ENCODE measurements at regions of chr1 and their contacts with region 1.

Region 1: DNA sequence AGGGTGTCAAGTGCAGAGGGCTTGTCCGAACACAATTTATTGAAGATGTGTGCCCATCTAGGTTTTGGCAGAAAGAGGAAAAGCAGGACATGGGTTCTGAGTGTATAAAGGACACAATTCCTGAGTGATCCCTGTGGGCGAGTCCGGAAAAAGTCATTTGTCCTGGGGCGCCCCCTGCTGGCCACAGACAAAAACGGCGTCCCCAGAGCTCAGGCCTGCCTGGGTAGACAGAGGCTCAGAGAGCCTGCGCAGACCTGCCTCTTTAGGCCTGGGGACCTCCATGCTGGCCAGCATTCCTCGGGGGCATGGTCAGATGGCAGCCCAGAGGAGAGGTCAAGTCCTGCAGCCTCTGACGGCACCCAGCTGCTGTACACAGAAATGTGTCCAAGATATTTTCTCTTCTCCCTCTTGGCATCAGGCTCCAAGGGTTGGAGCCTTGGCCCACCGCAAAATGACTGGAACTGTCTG is 65.5 kb upstream of the LRP8 start:
- DNase-seq: peak; percentile 75
- H3K4me3 Mint-ChIP-seq: no peak overlapping the region
- H3K27ac Mint-ChIP-seq: no peak overlapping the region
- H3K4me1 Mint-ChIP-seq: no peaks in the 10 kb centered on the region
- H3K27me3 Mint-ChIP-seq: peaks cover 53% of the 10 kb centered on the region

Region 2: DNA sequence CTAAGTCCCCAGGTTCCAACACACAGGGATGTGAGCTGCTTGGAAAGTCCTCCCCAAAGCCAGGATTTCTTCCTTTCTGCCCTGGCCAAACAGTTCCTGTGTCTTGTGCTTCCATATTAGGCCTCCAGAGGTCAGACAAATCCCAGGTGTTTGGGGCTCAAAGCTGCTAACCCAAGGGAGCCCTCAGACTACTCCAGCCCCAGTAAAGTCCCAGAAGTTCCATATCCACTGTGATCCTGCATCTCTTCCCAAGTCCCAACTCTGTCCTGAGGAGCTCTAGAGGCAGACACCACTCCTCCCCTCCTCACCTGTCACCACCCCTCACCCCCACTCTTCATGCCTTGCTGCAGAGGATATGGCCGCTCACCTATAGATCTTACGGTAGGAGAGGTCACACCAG is 127.3 kb before region 1 on chr1:
- CTCF ChIA-PET with region 1: interaction called, 16 read pairs
- DNase-seq: no peak
- H3K4me3 Mint-ChIP-seq: no peak overlapping the region
- H3K27ac Mint-ChIP-seq: no peak overlapping the region
- H3K4me1 Mint-ChIP-seq: no peaks in the 10 kb centered on the region
- H3K27me3 Mint-ChIP-seq: no peaks in the 10 kb centered on the region

Region 3: DNA sequence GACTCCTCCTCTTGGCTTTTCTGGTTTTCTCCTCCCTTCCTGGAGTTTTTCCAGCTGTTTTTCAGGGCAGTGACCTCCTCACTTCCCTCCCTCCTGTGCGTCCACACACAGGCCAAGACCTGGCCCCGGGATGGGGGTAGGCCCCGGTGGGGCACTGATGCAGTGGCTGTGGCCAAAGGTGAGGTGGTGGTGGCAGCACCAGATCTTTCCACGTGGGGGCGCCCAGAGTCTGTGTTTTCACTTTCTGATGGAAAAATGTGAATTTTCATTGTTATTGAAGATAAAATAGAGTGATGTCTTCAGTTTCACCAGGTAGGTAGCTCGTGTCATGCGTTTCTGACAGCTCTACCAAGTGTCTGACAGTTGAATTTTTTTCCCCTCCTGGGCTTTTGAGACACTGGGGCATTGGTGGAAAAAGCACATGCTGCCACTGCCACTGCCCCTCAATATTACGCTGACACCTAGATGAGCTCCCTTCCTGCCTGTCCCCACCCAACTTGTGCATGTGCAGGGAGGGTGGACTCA is 115.1 kb before region 1 on chr1:
- CTCF ChIA-PET with region 1: interaction called, 141 read pairs
- DNase-seq: peak; percentile 81
- H3K4me3 Mint-ChIP-seq: no peak overlapping the region
- H3K27ac Mint-ChIP-seq: peak overlapping the region; percentile 42
- H3K4me1 Mint-ChIP-seq: no peaks in the 10 kb centered on the region
- H3K27me3 Mint-ChIP-seq: no peaks in the 10 kb centered on the region

Region 4: GRCh38 chr1:53413175-53414001 is 20.0 kb after region 1 on chr1:
- CTCF ChIA-PET with region 1: interaction called, 23 read pairs
- DNase-seq: peak; percentile 75
- H3K4me3 Mint-ChIP-seq: peak overlapping the region; percentile 46
- H3K27ac Mint-ChIP-seq: peak overlapping the region; percentile 99
- H3K4me1 Mint-ChIP-seq: peaks cover 49% of the 10 kb centered on the region
- H3K27me3 Mint-ChIP-seq: peaks cover 14% of the 10 kb centered on the region